ENCODE measurements at regions of chr13 and their contacts with region 1.

Region 1: GRCh38 chr13:23660249-23660648 is 90.0 kb downstream of the TNFRSF19 start:
- DNase-seq: no peak
- ATAC-seq: no peak
- H3K4me3 ChIP-seq: no peak overlapping the region
- H3K27ac ChIP-seq: no peak overlapping the region
- H3K4me1 ChIP-seq: no peaks in the 10 kb centered on the region
- H3K27me3 ChIP-seq: no peaks in the 10 kb centered on the region
- CTCF ChIP-seq: no peak

Region 2: DNA sequence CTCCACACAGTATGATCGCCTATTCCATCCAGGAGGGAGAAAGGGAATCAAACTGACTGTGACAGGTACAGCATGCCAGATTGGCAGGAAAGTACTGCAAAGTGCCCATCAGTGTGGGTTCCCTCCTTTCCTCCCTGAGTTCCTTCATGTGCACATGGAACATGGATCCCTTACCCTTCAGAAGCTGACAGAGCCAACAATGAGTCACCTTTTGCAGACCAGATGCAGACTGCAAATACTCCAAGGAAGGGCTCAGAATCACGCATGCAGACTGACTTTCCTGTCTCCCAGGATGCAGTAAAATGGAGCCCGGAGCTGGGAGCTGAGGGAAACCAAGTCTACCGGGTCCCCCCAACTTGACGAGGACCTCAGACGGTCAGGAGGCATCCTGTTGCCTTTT is 268.5 kb before region 1 on chr13:
- CTCF ChIA-PET with region 1: interaction called, 10 read pairs
- POLR2A ChIA-PET with region 1: no interaction called
- intact Hi-C with region 1: no loop called
- DNase-seq: peak; percentile 24
- ATAC-seq: peak; percentile 45
- H3K4me3 ChIP-seq: no peak overlapping the region
- H3K27ac ChIP-seq: no peak overlapping the region
- H3K4me1 ChIP-seq: no peaks in the 10 kb centered on the region
- H3K27me3 ChIP-seq: no peaks in the 10 kb centered on the region
- CTCF ChIP-seq: no peak

Measured in PC-3 (cell line).